Activated naive CD4-positive, alpha-beta T cell treated with anti-CD3 and anti-CD28 coated beads for 36 hours (primary cell): ENCODE measurements at regions of chr13 and their contacts with region 1.

Region 1: DNA sequence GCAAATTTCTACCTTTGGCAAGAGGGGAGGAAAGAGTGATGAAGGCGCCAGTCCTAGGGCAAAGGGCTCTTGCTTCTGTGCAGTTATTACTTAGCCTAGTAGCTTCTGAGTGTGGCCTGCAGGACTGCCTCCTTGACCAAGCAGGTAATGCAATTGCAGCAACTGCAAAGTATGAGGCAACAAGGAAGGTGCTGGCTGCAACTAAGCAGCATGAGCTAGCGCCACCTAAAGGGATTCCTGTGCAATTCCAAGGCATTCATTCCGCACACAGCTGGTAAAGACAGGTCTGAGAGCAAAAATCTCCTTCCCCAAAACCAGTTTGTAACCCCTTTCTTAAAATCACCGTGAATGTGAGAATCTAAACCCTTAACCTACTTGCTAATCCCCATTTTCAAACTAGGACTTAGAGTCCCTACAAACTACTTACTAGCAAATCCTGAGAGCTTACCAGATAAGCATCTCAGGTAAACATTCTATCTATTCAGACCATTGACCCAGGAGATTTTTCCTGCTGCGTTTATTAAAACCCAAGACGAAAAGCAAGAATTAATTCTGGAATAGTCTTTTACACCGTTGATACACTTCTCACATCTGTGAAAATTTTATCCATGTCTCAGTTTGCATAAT is 62.9 kb downstream of the DCT start:
- DNase-seq: no peak
- H3K4me3 Mint-ChIP-seq: no peak overlapping the region
- H3K27ac Mint-ChIP-seq: no peak overlapping the region
- H3K4me1 Mint-ChIP-seq: peaks cover 49% of the 10 kb centered on the region
- H3K27me3 Mint-ChIP-seq: no peaks in the 10 kb centered on the region

Region 2: DNA sequence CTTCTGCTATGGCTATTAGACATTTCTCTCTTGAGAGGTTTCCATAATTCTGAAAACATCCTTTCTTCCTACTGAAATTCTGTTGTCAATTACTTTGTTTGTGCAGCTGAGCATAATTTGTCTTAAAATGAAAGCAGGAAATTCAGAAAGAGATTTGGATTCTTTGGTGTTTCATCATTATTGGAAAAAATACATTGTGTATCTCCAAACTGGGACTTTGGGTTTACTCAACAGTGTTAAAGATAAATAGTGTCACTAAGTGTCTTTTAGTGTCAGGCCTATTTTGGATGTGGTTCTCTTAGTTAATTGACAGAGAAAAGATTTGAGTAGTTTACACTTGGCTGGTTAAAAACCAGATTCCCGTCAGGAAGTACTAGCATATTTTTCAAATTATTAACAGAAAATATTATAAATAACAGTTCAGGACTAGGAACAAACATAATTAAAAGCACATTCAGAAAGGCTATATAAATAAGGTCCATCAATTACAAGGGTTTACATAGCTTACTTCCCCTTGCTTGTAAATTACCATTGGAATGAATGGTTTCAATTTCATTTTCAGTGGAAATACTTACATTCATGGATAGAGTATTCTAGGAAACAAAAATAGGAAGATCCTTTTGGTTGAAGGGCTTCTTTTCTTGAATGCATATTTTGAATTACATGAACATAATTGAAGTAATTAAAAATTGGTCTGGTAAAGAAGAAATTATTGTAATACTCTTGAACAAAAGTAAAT is 706.9 kb before region 1 on chr13:
- CTCF ChIA-PET with region 1: no interaction called
- intact Hi-C with region 1: no loop called
- DNase-seq: no peak
- H3K4me3 Mint-ChIP-seq: no peak overlapping the region
- H3K27ac Mint-ChIP-seq: no peak overlapping the region
- H3K4me1 Mint-ChIP-seq: no peaks in the 10 kb centered on the region
- H3K27me3 Mint-ChIP-seq: no peaks in the 10 kb centered on the region

Region 3: DNA sequence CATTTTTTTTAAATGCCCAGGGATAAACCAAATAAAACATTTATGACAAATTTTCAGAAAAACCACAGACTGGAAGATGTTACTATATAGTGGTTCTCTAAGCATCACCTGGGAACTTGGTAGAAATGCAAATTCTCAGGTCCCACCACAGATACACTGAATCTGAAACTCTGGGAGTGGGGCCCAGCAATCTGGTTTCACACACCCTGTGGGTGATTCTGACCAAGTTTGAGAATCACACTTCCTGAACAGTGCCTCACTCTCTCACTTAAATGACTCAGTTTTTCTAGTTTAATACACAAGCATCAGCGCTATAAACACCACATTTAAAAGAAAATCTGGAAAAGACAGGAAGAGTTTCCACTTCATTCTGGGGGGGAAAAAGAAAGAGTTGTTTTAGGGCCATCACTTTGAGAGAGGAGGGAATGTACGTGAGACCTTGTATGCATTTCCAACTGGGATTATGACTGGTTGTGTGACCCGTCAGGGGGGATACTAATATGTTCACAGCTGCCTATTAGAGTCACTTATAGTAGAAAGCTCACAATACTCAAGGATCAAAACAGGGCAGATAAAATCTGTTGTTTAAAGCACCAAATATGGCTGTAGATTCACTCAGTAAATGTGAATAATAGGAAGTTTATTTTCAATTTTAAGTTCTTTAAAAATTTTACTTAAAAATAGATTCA is 622.2 kb before region 1 on chr13:
- CTCF ChIA-PET with region 1: no interaction called
- intact Hi-C with region 1: loop called (anchors 1 kb)
- DNase-seq: peak; percentile 75
- H3K4me3 Mint-ChIP-seq: no peak overlapping the region
- H3K27ac Mint-ChIP-seq: no peak overlapping the region
- H3K4me1 Mint-ChIP-seq: peaks cover 8% of the 10 kb centered on the region
- H3K27me3 Mint-ChIP-seq: peaks cover 34% of the 10 kb centered on the region

Region 4: DNA sequence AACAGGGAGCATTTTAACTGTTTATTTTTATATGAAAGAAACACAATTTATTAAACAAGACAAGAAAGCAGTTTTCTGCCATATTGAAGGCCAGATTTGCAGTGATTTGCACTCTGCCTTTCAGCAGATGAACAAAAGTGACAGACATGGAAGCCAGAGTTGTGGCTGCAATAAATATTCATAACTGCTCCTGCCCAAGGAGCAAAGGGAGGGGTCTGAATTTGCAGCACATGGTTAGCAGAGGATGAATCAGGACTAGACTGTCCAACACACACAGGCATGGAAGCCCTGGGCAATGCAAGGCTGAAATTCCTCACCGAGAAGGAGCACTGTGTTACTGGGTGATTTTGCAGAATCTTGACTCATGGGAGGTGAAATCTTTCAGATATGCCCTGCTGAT is 355.3 kb before region 1 on chr13:
- CTCF ChIA-PET with region 1: no interaction called
- intact Hi-C with region 1: no loop called
- DNase-seq: no peak
- H3K4me3 Mint-ChIP-seq: no peak overlapping the region
- H3K27ac Mint-ChIP-seq: no peak overlapping the region
- H3K4me1 Mint-ChIP-seq: no peaks in the 10 kb centered on the region
- H3K27me3 Mint-ChIP-seq: peaks cover 3% of the 10 kb centered on the region

Region 5: DNA sequence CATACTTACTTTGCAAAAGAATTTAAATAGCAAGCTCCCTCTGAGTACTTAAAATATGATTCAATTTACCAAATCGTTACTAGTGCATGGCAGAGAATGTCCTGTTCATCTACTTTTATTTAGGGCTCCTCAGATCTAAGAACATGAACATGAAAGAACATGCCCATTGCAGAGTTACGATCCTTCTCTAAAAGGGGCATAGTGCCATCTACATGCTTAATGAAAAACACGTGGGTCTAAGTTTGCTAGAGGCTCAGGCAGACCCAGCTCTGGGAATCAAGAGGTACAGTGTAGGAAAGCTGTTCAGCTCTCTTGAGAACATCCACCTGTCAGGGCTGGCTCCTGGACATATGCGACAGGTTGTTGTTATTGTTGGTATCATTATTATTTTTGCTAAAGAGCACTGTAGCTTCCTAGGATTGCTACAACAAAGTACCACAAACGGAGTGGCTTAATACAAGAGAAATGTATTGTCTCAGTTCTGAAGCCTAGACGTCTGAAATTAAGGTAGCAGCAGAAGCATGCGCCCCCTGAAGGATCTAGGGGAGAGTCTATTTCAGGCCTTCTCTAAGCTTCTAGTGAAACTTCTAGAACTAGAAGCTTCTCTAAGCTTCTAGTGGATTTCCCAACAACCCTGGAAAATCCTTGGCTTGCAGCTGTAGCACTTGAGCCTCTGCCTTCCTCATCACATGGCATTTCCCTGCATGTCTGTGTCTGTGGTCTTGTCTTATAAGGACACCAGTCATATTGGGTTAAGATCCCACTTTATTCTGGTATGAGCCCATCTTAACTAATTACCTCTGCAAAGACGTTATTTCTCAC is 71.0 kb before region 1 on chr13:
- CTCF ChIA-PET with region 1: interaction called, 3 read pairs
- intact Hi-C with region 1: loop called (anchors 1 kb)
- DNase-seq: no peak
- H3K4me3 Mint-ChIP-seq: no peak overlapping the region
- H3K27ac Mint-ChIP-seq: no peak overlapping the region
- H3K4me1 Mint-ChIP-seq: peaks cover 24% of the 10 kb centered on the region
- H3K27me3 Mint-ChIP-seq: peaks cover 4% of the 10 kb centered on the region

Region 6: DNA sequence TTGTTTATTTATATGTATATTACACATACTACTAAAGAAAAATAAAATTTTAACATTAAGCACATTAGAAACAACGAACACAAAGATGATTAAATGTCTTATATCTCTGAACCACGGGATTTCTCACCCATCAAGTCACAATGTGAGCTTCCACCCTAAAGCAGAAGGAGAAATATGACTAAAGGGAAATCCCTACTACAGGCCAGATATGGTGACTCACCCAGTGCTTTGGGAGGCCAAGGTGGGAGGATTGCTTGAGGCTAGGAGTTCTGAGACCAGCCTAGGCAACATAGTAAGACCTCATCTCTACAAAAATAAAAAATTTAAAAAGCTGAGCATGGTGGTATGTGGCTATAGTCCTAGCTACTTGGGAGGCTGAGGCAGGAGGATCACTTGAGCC is 38.3 kb after region 1 on chr13:
- CTCF ChIA-PET with region 1: no interaction called
- intact Hi-C with region 1: loop called (anchors 1 kb)
- DNase-seq: peak; percentile 42
- H3K4me3 Mint-ChIP-seq: no peak overlapping the region
- H3K27ac Mint-ChIP-seq: no peak overlapping the region
- H3K4me1 Mint-ChIP-seq: no peaks in the 10 kb centered on the region
- H3K27me3 Mint-ChIP-seq: no peaks in the 10 kb centered on the region

Region 7: GRCh38 chr13:94601446-94602431 is 185.2 kb after region 1 on chr13 and contains the start of gene GPR180:
- CTCF ChIA-PET with region 1: no interaction called
- intact Hi-C with region 1: loop called (anchors 1 kb)
- DNase-seq: peak; percentile 94
- H3K4me3 Mint-ChIP-seq: peak within 1 kb of the TSS; percentile 86
- H3K27ac Mint-ChIP-seq: peak within 1 kb of the TSS; percentile 84
- H3K4me1 Mint-ChIP-seq: peaks cover 34% of the 10 kb centered on the region
- H3K27me3 Mint-ChIP-seq: no peaks in the 10 kb centered on the region
- total RNA-seq, gene GPR180: 5.6 to 5.7 TPM

Region 8: GRCh38 chr13:95050800-95051615 is 634.4 kb after region 1 on chr13:
- CTCF ChIA-PET with region 1: no interaction called
- intact Hi-C with region 1: loop called (anchors 2 kb)
- DNase-seq: peak; percentile 16
- H3K4me3 Mint-ChIP-seq: no peak overlapping the region
- H3K27ac Mint-ChIP-seq: no peak overlapping the region
- H3K4me1 Mint-ChIP-seq: peaks cover 20% of the 10 kb centered on the region
- H3K27me3 Mint-ChIP-seq: no peaks in the 10 kb centered on the region

Region 9: GRCh38 chr13:95676762-95677563 is 1260.4 kb after region 1 on chr13 and contains the start of gene DNAJC3:
- CTCF ChIA-PET with region 1: no interaction called
- intact Hi-C with region 1: loop called (anchors 5 kb)
- DNase-seq: peak; percentile 98
- H3K4me3 Mint-ChIP-seq: peak within 1 kb of the TSS; percentile 93
- H3K27ac Mint-ChIP-seq: peak within 1 kb of the TSS; percentile 86
- H3K4me1 Mint-ChIP-seq: peaks cover 53% of the 10 kb centered on the region
- H3K27me3 Mint-ChIP-seq: no peaks in the 10 kb centered on the region
- total RNA-seq, gene DNAJC3: 13.8 to 14.0 TPM